ENCODE measurements at regions of chr14 and their contacts with region 1.

Region 1: DNA sequence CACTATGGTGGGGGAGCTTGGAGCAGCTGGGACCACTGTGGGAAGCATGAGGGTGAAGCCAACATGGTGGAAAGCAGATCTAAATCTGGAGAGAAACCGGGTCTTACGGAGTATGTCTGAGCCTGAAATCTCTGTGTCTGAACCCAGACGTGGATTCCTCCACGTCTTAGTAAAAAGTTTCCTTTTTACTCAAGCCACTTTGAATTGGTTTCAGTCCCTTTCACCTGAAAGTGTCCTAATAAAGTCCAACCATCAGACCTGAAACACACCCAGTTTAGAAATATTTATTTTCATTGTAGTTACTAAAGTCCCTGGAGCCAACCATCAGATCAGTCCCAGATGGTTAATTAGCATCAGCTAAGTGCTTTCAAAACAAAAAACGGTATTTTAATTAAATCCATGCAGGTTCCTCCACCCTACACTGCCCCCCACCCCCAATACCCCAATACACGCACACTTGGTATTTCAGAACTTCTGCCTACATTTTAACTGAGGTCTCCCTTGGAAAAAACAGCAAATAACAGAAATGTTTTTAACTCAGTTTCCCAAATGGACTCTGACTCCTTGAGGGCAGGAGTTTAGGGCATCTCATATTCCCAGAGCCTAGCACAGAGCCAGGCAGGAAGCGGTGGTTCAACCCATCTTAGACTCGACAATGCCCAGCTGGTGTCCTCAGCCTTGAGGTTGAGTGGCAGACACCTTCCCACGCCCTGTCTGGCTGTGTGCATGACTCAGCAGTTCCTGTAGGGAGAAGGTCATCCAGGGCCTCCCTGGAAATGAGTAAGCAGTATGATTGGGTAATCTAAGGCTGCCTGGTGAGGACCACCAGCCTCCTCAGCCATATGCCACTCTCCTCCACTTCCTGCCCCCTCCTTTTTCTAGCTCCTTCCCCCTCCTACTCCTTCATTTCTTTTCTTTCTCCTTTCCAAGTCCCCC is 175.8 kb downstream of the TTC8 start:
- DNase-seq: peak; percentile 80 to 92 (median 91)
- H3K4me3 ChIP-seq: no peak overlapping the region
- H3K27ac ChIP-seq: no peak overlapping the region
- H3K4me1 ChIP-seq: peaks cover 0 to 10% (median 4%) of the 10 kb centered on the region in 4 experiments
- H3K27me3 ChIP-seq: peaks cover 0 to 5% (median 0%) of the 10 kb centered on the region in 5 experiments

Region 2: DNA sequence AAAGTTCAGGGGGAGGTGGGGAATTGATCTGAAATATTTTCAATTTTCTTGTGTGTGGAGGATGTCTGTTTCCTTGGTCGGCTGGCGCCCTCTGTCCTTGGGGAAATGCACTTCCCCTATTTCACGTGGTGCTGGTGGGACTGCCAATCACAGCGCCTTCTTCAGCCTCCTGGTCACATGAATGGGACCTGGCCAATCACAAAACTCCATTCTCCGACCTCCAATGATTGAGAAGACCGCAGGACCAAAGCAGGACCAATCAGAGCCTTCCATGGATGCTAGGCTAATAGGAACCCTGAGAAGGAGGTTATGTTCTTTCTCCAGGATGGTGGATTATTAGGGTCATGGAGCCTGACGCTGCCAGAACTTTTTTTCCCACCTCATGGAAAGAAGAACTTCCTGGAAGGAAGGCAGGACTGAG is 12.8 kb after region 1 on chr14:
- CTCF ChIA-PET with region 1: interaction called, 11 read pairs
- POLR2A ChIA-PET with region 1: interaction called, 4 read pairs
- DNase-seq: peak; percentile 42 to 57 (median 55)
- H3K4me3 ChIP-seq: no peak overlapping the region
- H3K27ac ChIP-seq: no peak overlapping the region
- H3K4me1 ChIP-seq: peaks cover 3 to 15% (median 14%) of the 10 kb centered on the region in 4 experiments
- H3K27me3 ChIP-seq: peaks cover 0 to 3% (median 0%) of the 10 kb centered on the region in 5 experiments

Region 3: GRCh38 chr14:89042021-89042420 is 41.7 kb after region 1 on chr14:
- CTCF ChIA-PET with region 1: no interaction called
- POLR2A ChIA-PET with region 1: no interaction called
- DNase-seq: no peak
- H3K4me3 ChIP-seq: no peak overlapping the region
- H3K27ac ChIP-seq: no peak overlapping the region
- H3K4me1 ChIP-seq: peaks cover 6 to 22% (median 11%) of the 10 kb centered on the region in 4 experiments
- H3K27me3 ChIP-seq: no peaks in the 10 kb centered on the region

Measured in common myeloid progenitor, CD34-positive (primary cell).